PC-9 (cell line): ENCODE measurements at regions of chr19 and their contacts with region 1.

Region 1: GRCh38 chr19:2461751-2462634 is 5.2 kb upstream of the LMNB2 start:
- DNase-seq: peak in 1 of 2 experiments; percentile 60
- H3K4me3 ChIP-seq: peak overlapping the region; percentile 61
- H3K27ac ChIP-seq: no peak overlapping the region
- H3K4me1 ChIP-seq: no peaks in the 10 kb centered on the region; the same call in 1 of the 2 replicates
- H3K27me3 ChIP-seq: no peaks in the 10 kb centered on the region
- CTCF ChIP-seq: no peak

Region 2: DNA sequence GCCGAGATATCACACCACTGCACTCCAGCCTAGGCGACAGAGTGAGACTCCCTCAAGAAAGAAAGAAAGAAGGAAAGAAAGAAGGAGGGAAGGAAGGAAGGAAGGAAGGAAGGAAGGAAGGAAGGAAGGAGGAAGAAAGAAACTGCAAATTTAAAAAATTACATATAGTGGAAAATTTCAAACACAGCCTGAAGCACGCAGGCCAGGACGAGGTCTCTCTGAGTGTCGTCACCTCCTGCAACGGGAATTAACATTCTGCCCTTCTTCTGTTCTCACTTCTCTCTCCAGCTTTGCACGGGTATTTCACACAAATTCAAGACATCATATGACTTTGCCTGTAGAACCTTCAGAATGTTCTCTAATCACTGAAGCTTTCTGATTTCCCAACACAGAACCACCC is 132.3 kb after region 1 on chr19:
- CTCF ChIA-PET with region 1: no interaction called
- POLR2A ChIA-PET with region 1: interaction called, 20 read pairs
- intact Hi-C with region 1: no loop called
- DNase-seq: no peak
- H3K4me3 ChIP-seq: no peak overlapping the region
- H3K27ac ChIP-seq: no peak overlapping the region
- H3K4me1 ChIP-seq: no peaks in the 10 kb centered on the region
- H3K27me3 ChIP-seq: no peaks in the 10 kb centered on the region
- CTCF ChIP-seq: no peak